HAP-1 (cell line): ENCODE measurements at regions of chr17 and their contacts with region 1.

Region 1: GRCh38 chr17:32783602-32784001 is 93.3 kb downstream of the MYO1D start:
- DNase-seq: peak in 1 of 2 experiments; percentile 57
- H3K4me3 ChIP-seq: no peak overlapping the region
- H3K4me1 ChIP-seq: no peaks in the 10 kb centered on the region
- H3K27me3 ChIP-seq: no peaks in the 10 kb centered on the region; the same call in none of the 2 replicates

Region 2: DNA sequence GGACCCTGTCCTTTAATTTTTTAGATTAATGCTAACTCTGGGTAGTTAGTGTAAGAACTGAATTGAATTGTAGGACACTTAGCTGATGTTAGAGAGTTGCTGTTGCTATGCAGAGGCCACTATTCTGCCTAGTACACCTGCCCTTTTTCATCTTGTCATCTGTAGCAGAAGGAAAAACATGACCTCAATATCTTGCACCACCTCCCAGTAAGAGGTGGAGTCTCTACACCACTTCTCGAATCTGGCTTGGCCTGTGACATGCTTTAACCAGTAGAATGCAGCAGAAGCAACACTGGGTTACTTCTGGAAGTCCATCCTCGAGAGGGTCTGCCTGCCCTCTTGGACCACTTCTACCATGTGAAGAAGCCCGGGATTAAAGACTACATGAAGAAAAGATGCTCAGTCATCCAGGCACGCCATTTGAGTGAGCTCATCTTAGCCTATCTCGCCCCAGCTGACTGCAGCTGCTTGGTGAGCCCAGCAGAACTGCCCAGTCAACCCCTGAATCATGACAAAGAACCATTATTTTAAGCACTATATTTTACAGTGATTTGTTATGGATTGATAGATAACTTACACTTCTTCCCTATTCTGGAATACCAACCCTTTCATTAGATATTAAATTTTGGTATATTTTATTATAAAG is 60.2 kb before region 1 on chr17:
- in situ Hi-C with region 1: no loop called
- DNase-seq: no peak
- H3K4me3 ChIP-seq: no peak overlapping the region
- H3K4me1 ChIP-seq: no peaks in the 10 kb centered on the region
- H3K27me3 ChIP-seq: no peaks in the 10 kb centered on the region

Region 3: DNA sequence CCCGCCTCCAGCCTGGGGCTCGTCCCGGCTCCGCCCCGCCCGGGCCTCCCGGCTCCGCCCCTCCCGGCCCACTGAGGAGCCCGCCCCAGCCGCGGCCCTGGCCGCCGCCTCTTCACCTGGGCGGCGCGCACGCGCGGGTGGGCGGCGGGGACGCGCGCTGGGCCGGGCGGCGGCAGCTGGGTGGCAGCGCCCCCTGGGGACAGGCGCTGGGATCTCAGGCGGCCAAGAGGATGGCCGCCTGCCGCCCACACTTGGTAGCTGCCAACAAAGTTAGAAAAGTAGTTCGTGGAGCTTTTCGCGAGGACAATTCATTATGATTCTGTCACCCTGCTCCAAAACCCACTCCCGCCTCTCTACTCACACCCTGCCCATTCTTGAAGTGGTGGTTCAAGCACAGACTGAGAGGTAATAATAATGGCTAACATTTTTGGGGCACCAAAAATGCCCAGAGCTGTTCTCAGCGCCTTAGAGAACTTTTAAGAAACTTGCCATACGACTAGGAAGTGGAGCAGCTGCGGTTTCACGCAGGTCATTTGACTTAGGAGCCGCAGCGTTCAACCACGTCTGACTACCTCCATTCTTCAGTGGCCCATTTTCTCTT is 93.7 kb after region 1 on chr17:
- in situ Hi-C with region 1: loop called (anchors 10 kb)
- DNase-seq: peak; percentile 78 to 92
- H3K4me3 ChIP-seq: peak overlapping the region; percentile 54
- H3K4me1 ChIP-seq: peaks cover 7% of the 10 kb centered on the region
- H3K27me3 ChIP-seq: peaks cover 7% of the 10 kb centered on the region; the same call in 1 of the 2 replicates

Region 4: GRCh38 chr17:32909787-32910369 is 126.3 kb after region 1 on chr17:
- in situ Hi-C with region 1: loop called (anchors 10 kb)
- DNase-seq: peak; percentile 65 to 78
- H3K4me3 ChIP-seq: no peak overlapping the region
- H3K4me1 ChIP-seq: peaks cover 8% of the 10 kb centered on the region; the same call in 1 of the 2 replicates
- H3K27me3 ChIP-seq: no peaks in the 10 kb centered on the region